PC-9 (cell line): ENCODE measurements at regions of chr12 and their contacts with region 1.

Region 1: DNA sequence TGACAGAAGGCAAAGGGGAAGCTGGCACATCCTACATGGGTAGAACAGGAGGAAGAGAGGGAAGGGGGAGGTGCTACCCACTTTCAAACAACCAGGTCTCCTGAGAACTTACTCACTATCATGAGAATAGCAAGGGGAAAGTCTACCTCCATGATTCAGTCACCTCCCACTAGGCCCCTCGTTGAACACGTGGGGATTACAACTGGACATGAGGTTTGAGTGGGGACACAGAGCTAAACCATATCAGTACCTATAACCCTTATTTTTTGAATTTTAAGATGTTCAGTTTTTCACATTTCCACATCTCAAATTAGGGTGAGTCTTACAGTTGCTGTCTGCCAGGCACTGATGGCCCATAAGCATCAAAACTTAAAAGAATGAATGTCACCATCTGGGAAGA is 80.2 kb upstream of the ST8SIA1 start:
- DNase-seq: no peak
- H3K4me3 ChIP-seq: no peak overlapping the region
- H3K27ac ChIP-seq: peak overlapping the region; percentile 61
- H3K4me1 ChIP-seq: peaks cover 60% of the 10 kb centered on the region
- H3K27me3 ChIP-seq: no peaks in the 10 kb centered on the region
- CTCF ChIP-seq: no peak

Region 2: DNA sequence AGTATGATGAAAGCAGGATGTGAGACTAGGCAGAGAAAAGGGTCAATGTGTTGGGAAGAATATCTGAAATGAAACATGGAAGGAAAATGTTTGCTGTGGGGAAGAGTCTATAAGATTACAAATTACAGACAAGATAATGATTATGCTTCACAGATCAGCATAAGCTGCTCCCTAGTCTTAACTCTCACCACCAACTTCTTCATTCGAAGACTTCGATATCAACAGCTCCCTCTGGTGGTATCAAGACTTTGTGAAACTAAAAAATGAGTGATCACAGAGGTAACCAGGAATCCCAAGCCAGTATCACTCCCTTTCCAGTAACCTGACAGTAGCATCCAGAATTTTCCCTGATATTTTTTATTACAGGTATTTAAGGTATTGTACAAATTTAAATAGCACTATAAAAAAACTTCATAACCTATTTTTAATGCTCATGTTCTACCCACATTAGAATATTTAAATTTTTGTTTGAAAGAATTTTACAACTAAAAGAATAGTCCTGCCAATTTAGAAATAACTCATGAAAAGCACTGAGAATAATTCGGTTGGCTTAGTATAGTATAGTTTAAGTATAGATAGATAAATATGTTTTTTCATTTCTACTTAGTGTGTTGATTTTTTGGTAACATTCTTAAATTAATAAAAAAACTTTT is 45.2 kb after region 1 on chr12:
- CTCF ChIA-PET with region 1: interaction called, 25 read pairs
- POLR2A ChIA-PET with region 1: no interaction called
- intact Hi-C with region 1: no loop called
- DNase-seq: no peak
- H3K4me3 ChIP-seq: no peak overlapping the region
- H3K27ac ChIP-seq: no peak overlapping the region
- H3K4me1 ChIP-seq: no peaks in the 10 kb centered on the region
- H3K27me3 ChIP-seq: no peaks in the 10 kb centered on the region
- CTCF ChIP-seq: peak; percentile 71